Left lung (tissue), 14 donors: ENCODE measurements at regions of chr1 and their contacts with region 1.

Region 1: GRCh38 chr1:115717541-115717940 is 51.0 kb downstream of the CASQ2 start:
- DNase-seq: peak in 1 of 4 donors; percentile 53
- ATAC-seq: peak; percentile 76
- H3K4me3 ChIP-seq: no peak overlapping the region
- H3K27ac ChIP-seq: no peak overlapping the region
- H3K4me1 ChIP-seq: no peaks in the 10 kb centered on the region
- H3K27me3 ChIP-seq: no peaks in the 10 kb centered on the region
- CTCF ChIP-seq: peak in 1 of 2 donors; percentile 32

Region 2: DNA sequence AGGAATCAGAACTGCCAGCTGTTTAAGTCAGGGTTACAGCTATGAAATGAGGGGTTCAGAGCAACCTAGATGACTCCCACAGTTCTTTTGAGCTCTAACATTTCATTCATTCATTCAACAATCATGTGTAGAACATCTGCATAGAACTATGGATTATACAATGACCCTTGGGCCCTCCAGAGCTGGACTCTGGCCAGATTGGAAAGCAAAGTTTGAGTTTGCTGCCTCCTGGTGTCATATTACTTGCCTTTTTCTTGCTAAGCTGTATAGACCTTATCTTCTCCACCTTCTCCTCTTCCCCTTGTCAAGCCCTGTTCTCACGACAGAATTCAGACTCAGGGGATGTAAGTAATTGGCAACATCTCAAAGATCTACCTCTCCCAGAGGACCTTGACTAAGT is 47.0 kb after region 1 on chr1:
- intact Hi-C with region 1: loop called in 1 of 2 experiments (anchors 5 kb)
- DNase-seq: peak in 2 of 4 donors; percentile 23 to 35
- ATAC-seq: peak; percentile 59
- H3K4me3 ChIP-seq: no peak overlapping the region
- H3K27ac ChIP-seq: no peak overlapping the region
- H3K4me1 ChIP-seq: no peaks in the 10 kb centered on the region
- H3K27me3 ChIP-seq: no peaks in the 10 kb centered on the region
- CTCF ChIP-seq: peak; percentile 11 to 22

Region 3: GRCh38 chr1:115839029-115839678 is 121.6 kb after region 1 on chr1:
- intact Hi-C with region 1: no loop called
- DNase-seq: peak in 1 of 4 donors; percentile 83
- ATAC-seq: peak; percentile 71
- H3K4me3 ChIP-seq: peak overlapping the region; percentile 19 to 25
- H3K27ac ChIP-seq: no peak overlapping the region
- H3K4me1 ChIP-seq: peaks cover 19 to 24% of the 10 kb centered on the region in 2 donors
- H3K27me3 ChIP-seq: peaks cover 72 to 97% of the 10 kb centered on the region in 2 donors
- CTCF ChIP-seq: no peak